CD8-positive, alpha-beta T cell (primary cell): ENCODE measurements at regions of chr6 and their contacts with region 1.

Region 1: DNA sequence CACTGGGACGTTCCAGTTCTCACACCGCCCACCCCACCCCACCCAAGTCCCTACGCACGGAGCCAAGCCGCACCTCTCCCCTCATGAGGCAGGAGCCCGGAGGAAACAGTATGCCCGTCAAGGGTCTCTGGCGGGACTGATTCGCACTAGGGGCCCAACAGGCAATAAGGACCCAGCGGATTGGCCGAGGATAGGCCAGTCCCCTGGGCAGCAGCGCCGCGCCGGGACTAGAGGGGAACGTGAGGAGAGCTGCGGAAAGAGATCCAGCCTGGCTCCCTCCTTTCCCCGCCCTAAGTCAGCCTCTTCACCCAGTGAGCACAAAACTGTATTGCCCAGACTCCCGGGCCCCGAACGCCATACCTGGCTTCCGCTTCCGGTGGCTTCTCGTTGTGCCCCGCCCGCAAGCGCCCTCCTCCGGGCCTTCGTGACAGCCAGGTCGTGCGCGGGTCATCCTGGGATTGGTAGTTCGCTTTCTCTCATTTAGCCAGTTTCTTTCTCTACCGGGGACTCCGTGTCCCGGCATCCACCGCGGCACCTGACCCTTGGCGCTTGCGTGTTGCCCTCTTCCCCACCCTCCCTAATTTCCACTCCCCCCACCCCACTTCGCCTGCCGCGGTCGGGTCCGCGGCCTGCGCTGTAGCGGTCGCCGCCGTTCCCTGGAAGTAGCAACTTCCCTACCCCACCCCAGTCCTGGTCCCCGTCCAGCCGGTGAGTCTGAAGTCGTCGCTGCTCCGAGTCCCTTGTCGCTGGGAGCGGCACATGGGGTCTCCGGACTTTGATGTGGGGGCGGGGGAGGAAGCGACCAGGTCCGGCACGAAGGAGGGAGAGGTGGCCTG is at the start of gene CSNK2B:
- DNase-seq: peak; percentile 95 to 99 (median 98)
- ATAC-seq: peak; percentile 84
- H3K4me3 ChIP-seq: peak within 1 kb of the TSS; percentile 91 to 94
- H3K4me3 Mint-ChIP-seq: peak within 1 kb of the TSS; percentile 95
- H3K27ac ChIP-seq: peak within 1 kb of the TSS; percentile 96 to 99
- H3K27ac Mint-ChIP-seq: peak within 1 kb of the TSS; percentile 98
- H3K4me1 ChIP-seq: peaks cover 44% of the 10 kb centered on the region
- H3K4me1 Mint-ChIP-seq: peaks cover 56% of the 10 kb centered on the region
- H3K27me3 ChIP-seq: no peaks in the 10 kb centered on the region
- H3K27me3 Mint-ChIP-seq: no peaks in the 10 kb centered on the region
- CTCF ChIP-seq: no peak
- total RNA-seq, gene CSNK2B: 80.9 to 86.1 TPM

Region 2: DNA sequence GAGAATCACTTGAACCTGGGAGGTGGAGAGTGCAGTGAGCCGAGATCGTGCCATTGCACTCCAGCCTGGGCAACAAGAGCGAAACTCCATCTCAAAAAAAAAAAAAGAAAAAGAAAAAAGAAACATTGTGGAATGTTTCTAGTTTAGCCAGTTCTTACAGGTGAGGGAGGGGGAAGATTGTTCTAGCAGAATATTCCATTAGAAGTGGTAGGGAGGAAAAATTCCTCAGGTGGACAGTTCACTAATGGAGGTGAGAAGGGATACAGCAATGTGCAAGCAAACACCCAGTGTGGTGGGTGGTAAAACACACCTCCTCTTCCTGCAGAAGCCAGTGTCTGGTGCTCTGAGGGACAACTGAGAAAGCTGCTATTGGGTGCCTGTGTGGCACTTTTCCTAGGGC is 30.8 kb after region 1 on chr6:
- CTCF ChIA-PET with region 1: no interaction called
- POLR2A ChIA-PET with region 1: no interaction called
- intact Hi-C with region 1: no loop called
- DNase-seq: no peak
- ATAC-seq: no peak
- H3K4me3 ChIP-seq: no peak overlapping the region
- H3K4me3 Mint-ChIP-seq: no peak overlapping the region
- H3K27ac ChIP-seq: no peak overlapping the region
- H3K27ac Mint-ChIP-seq: no peak overlapping the region
- H3K4me1 ChIP-seq: peaks cover 8% of the 10 kb centered on the region
- H3K4me1 Mint-ChIP-seq: peaks cover 25% of the 10 kb centered on the region
- H3K27me3 ChIP-seq: no peaks in the 10 kb centered on the region
- H3K27me3 Mint-ChIP-seq: no peaks in the 10 kb centered on the region
- CTCF ChIP-seq: no peak

Region 3: GRCh38 chr6:31723245-31723979 is 57.7 kb after region 1 on chr6 and contains the start of gene MPIG6B:
- CTCF ChIA-PET with region 1: no interaction called
- POLR2A ChIA-PET with region 1: no interaction called
- intact Hi-C with region 1: no loop called
- DNase-seq: peak in 1 of 9 experiments; percentile 30
- ATAC-seq: no peak
- H3K4me3 ChIP-seq: no peak within 1 kb of the TSS
- H3K4me3 Mint-ChIP-seq: peak within 1 kb of the TSS; percentile 60
- H3K27ac ChIP-seq: no peak within 1 kb of the TSS
- H3K27ac Mint-ChIP-seq: no peak within 1 kb of the TSS
- H3K4me1 ChIP-seq: peaks cover 17% of the 10 kb centered on the region
- H3K4me1 Mint-ChIP-seq: peaks cover 27% of the 10 kb centered on the region
- H3K27me3 ChIP-seq: no peaks in the 10 kb centered on the region
- H3K27me3 Mint-ChIP-seq: no peaks in the 10 kb centered on the region
- CTCF ChIP-seq: no peak
- total RNA-seq, gene MPIG6B: 0.49 to 1.1 TPM

Region 4: DNA sequence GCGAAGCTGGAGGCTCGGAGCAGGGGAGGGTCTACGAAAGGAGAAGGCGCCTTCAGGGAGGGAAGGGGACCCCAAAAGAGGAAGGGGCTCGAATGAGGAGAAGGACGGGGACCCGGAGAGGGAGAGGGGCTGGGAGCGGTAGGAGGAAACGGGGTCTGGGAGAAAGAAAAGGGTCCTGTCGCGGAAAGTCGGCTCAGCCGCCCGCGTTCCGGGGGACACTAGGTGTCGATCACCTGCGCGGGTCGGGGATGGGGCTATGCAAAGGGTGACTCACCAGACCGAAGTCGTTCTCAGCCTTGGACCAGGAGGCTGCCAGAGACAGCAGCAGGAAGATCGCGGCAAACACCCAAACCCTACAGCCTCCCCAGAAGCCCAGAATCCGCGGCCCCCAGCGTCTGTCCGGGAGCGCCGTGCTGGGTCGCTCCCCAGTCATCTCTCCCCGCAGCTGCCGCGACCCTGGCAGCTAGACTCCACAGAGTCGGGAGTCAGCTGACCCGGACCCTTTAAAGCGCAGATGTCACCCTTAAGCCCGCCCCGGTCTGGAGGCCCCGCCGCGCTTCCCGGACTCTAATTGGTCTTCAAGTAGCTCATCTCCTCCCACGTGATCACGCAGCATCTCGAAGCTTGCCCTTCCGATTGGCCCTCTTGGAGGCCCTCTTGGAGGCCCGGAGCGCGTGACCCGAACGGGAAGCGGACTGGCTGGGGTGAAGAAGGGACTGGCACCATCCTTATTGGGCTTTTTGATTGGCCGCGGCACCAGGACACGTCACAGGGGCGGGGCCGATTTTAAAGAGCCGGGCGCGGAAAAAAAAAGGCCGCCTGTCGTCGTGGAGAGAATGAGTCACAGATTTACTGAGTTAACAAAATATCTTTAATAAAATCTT is 196.9 kb after region 1 on chr6 and contains the start of gene NEU1:
- CTCF ChIA-PET with region 1: no interaction called
- POLR2A ChIA-PET with region 1: no interaction called
- intact Hi-C with region 1: loop called in 1 of 2 experiments (anchors 1 kb)
- DNase-seq: peak; percentile 97 to 100 (median 98)
- ATAC-seq: peak; percentile 91
- H3K4me3 ChIP-seq: peak within 1 kb of the TSS; percentile 75 to 94
- H3K4me3 Mint-ChIP-seq: peak within 1 kb of the TSS; percentile 95
- H3K27ac ChIP-seq: peak within 1 kb of the TSS; percentile 77 to 97
- H3K27ac Mint-ChIP-seq: peak within 1 kb of the TSS; percentile 98
- H3K4me1 ChIP-seq: peaks cover 17% of the 10 kb centered on the region
- H3K4me1 Mint-ChIP-seq: peaks cover 23% of the 10 kb centered on the region
- H3K27me3 ChIP-seq: no peaks in the 10 kb centered on the region
- H3K27me3 Mint-ChIP-seq: no peaks in the 10 kb centered on the region
- CTCF ChIP-seq: no peak
- total RNA-seq, gene NEU1: 30.0 to 30.2 TPM

Region 5: DNA sequence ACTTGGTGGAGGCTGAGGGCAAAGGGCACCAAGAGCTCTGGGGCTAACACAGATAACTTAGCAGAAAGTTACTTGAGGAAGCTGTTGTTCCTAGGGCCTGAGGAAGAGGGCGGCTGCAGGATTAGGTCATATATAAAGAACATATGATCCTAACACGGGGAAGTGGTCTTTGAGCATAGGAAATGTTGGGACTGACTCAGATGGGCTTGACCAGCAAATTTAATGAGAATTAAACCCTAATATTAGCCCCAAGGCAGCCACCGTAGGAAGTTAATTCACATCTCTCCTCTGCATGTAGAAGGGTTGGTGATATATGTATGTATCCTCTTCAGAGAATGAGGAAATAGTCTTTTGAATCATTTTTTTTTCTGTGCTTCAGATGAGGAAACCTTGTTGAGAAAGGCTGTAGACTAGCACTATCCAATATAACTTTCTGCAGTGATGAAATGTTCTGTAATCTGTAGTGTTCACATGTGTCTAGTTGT is 1779.4 kb after region 1 on chr6:
- CTCF ChIA-PET with region 1: no interaction called
- POLR2A ChIA-PET with region 1: no interaction called
- intact Hi-C with region 1: no loop called
- DNase-seq: no peak
- ATAC-seq: no peak
- H3K4me3 ChIP-seq: no peak overlapping the region
- H3K4me3 Mint-ChIP-seq: no peak overlapping the region
- H3K27ac ChIP-seq: no peak overlapping the region
- H3K27ac Mint-ChIP-seq: peak overlapping the region; percentile 10
- H3K4me1 ChIP-seq: no peaks in the 10 kb centered on the region
- H3K4me1 Mint-ChIP-seq: peaks cover 5% of the 10 kb centered on the region
- H3K27me3 ChIP-seq: no peaks in the 10 kb centered on the region
- H3K27me3 Mint-ChIP-seq: no peaks in the 10 kb centered on the region
- CTCF ChIP-seq: no peak